ENCODE measurements at regions of chr2 and their contacts with region 1.

Region 1: DNA sequence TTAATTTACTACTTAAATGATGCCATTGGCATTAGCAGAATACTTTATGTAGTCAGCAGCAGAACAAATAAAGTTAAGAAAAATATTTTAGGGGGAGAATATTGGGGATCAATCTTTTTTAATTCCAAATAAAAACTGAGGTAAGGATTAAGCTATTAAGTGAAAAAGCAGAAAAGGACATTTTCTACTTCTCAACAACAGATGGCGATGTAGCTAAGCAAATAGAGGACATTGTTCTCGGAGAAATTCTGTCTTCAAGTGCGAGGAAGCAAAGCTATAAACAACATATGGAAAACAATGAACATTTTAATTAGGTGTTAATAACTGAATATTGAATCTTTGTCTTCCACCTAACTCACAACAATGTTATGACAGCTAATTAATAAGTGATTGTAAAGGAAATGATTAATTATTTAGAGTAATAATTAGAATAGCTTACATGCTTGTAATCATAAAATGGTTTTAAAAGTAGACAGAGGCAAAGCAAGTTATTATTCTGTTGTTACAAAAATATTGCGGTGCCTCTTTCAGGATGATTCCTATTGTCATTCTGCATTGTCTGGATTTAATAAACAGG is 32.9 kb upstream of the CCDC93 start:
- DNase-seq: peak in 6 of 9 donors; percentile 2 to 36 (median 30)
- ATAC-seq: peak; percentile 41
- H3K4me3 ChIP-seq: no peak overlapping the region
- H3K4me3 Mint-ChIP-seq: no peak overlapping the region
- H3K27ac ChIP-seq: no peak overlapping the region
- H3K27ac Mint-ChIP-seq: no peak overlapping the region
- H3K4me1 ChIP-seq: no peaks in the 10 kb centered on the region
- H3K4me1 Mint-ChIP-seq: peaks cover 0 to 4% (median 0%) of the 10 kb centered on the region in 7 donors
- H3K27me3 ChIP-seq: peaks cover 0 to under 1% of the 10 kb centered on the region in 2 donors
- H3K27me3 Mint-ChIP-seq: peaks cover 59 to 69% (median 64%) of the 10 kb centered on the region in 5 donors

Region 2: DNA sequence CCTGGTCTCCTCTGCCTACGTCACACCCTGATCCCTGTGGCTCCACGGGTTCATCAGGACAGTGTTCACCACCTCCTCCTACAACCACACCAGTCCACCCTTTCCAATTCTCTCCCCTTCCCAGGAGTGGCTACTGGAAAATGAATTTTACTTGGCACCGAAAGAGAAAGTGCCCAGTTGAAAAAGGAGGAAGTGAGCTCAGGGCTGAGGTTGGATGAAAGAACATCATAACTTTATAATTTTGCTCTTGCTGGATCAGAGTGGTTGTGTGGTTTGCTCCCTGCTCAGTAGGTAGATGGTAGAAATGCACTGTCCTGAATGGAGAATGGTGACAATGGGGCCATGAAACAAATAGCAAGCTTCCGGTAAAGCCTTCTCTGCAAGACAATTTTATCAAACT is 372.6 kb before region 1 on chr2:
- CTCF ChIA-PET with region 1: no interaction called
- POLR2A ChIA-PET with region 1: no interaction called
- intact Hi-C with region 1: no loop called
- DNase-seq: no peak
- ATAC-seq: no peak
- H3K4me3 ChIP-seq: no peak overlapping the region
- H3K4me3 Mint-ChIP-seq: no peak overlapping the region
- H3K27ac ChIP-seq: no peak overlapping the region
- H3K27ac Mint-ChIP-seq: no peak overlapping the region
- H3K4me1 ChIP-seq: no peaks in the 10 kb centered on the region
- H3K4me1 Mint-ChIP-seq: no peaks in the 10 kb centered on the region
- H3K27me3 ChIP-seq: peaks cover 0 to 2% of the 10 kb centered on the region in 2 donors
- H3K27me3 Mint-ChIP-seq: peaks cover 0 to 4% (median 0%) of the 10 kb centered on the region in 5 donors

Region 3: GRCh38 chr2:118148809-118149208 is 102.1 kb after region 1 on chr2:
- CTCF ChIA-PET with region 1: no interaction called
- POLR2A ChIA-PET with region 1: no interaction called
- intact Hi-C with region 1: loop called (anchors 1 to 5 kb)
- DNase-seq: no peak
- ATAC-seq: no peak
- H3K4me3 ChIP-seq: no peak overlapping the region
- H3K4me3 Mint-ChIP-seq: no peak overlapping the region
- H3K27ac ChIP-seq: no peak overlapping the region
- H3K27ac Mint-ChIP-seq: no peak overlapping the region
- H3K4me1 ChIP-seq: no peaks in the 10 kb centered on the region
- H3K4me1 Mint-ChIP-seq: peaks cover 0 to 4% (median 0%) of the 10 kb centered on the region in 7 donors
- H3K27me3 ChIP-seq: no peaks in the 10 kb centered on the region
- H3K27me3 Mint-ChIP-seq: peaks cover 2 to 33% (median 19%) of the 10 kb centered on the region in 5 donors

Region 4: DNA sequence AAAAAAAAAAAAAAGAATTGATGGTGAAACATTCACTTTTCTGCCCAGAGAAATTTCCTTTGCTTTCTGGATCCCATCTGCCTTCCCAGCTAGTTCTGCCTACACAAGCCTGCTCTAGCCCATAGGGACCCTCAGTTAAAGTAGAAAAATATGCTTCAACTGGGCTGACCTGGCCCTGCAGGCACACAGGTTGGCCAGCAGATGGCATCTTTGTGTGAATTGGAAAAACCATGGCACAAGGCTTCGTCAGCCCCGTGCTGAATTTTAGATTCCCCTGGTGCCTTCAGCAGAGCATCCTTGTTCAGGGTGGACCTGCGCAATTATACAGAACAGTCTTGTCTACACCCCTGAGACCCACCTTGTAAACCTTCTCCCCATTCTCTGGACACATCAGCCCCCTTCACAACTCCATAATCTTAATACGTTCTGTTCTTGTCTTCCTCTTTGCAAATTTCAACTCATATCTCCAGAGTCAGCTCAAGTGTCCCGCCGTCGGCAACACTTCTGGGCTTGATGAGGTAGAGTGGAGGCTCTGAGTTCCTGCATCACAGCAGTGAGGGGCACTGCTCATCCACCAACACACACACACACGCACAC is 156.1 kb after region 1 on chr2:
- CTCF ChIA-PET with region 1: no interaction called
- POLR2A ChIA-PET with region 1: no interaction called
- intact Hi-C with region 1: loop called (anchors 1 to 5 kb)
- DNase-seq: peak in 7 of 9 donors; percentile 30 to 57 (median 46)
- ATAC-seq: peak; percentile 91
- H3K4me3 ChIP-seq: no peak overlapping the region
- H3K4me3 Mint-ChIP-seq: peak overlapping the region; percentile 9 to 70 (median 36)
- H3K27ac ChIP-seq: no peak overlapping the region
- H3K27ac Mint-ChIP-seq: no peak overlapping the region
- H3K4me1 ChIP-seq: no peaks in the 10 kb centered on the region
- H3K4me1 Mint-ChIP-seq: peaks cover 4 to 7% (median 6%) of the 10 kb centered on the region in 7 donors
- H3K27me3 ChIP-seq: no peaks in the 10 kb centered on the region
- H3K27me3 Mint-ChIP-seq: peaks cover 19 to 28% (median 22%) of the 10 kb centered on the region in 5 donors

Region 5: DNA sequence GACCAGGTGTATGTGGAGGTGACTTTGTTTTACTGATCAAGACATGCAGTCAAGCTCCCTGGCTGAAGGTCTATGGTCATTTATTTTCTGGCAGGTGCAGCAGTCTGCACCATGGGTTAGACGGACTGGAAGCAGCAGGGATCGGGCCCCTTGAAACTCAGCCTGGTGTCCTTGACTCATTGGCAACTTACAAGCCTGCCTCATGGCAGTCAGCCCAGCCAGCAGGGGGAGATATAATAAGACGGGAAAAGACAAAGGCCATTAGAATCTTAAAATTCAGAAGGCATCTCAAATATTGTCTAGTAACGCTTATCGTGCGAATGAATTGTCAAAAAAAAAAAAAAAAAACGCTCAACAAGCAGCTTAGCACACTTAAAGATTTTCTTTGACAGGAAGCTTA is 492.6 kb after region 1 on chr2:
- CTCF ChIA-PET with region 1: no interaction called
- POLR2A ChIA-PET with region 1: no interaction called
- intact Hi-C with region 1: loop called in 1 of 2 experiments (anchors 10 kb)
- DNase-seq: no peak
- ATAC-seq: no peak
- H3K4me3 ChIP-seq: no peak overlapping the region
- H3K4me3 Mint-ChIP-seq: no peak overlapping the region
- H3K27ac ChIP-seq: no peak overlapping the region
- H3K27ac Mint-ChIP-seq: no peak overlapping the region
- H3K4me1 ChIP-seq: no peaks in the 10 kb centered on the region
- H3K4me1 Mint-ChIP-seq: no peaks in the 10 kb centered on the region
- H3K27me3 ChIP-seq: no peaks in the 10 kb centered on the region
- H3K27me3 Mint-ChIP-seq: peaks cover 0 to 17% (median 11%) of the 10 kb centered on the region in 5 donors

Region 6: DNA sequence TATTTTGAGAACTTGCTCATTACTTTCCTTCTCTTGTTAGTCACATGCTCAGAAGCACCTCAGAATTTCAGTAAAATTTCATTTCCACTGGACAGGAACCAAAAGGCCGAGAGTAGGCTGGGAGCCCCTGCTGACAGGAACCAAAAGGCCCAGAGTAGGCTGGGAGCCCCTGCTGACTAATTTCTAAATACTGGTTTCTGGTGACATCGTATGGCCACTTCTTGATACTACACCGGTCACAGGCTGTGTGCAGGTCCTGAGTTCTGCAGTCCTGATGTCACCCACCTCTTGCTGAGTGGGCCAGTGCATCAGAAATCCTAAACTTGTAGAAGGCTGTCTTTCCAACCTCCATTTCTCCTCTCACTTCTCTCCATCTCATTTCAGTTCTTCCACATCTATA is 818.4 kb after region 1 on chr2:
- CTCF ChIA-PET with region 1: interaction called, 3 read pairs
- POLR2A ChIA-PET with region 1: no interaction called
- intact Hi-C with region 1: loop called (anchors 1 to 2 kb)
- DNase-seq: peak in 1 of 9 donors; percentile 32
- ATAC-seq: peak; percentile 76
- H3K4me3 ChIP-seq: no peak overlapping the region
- H3K4me3 Mint-ChIP-seq: no peak overlapping the region
- H3K27ac ChIP-seq: no peak overlapping the region
- H3K27ac Mint-ChIP-seq: no peak overlapping the region
- H3K4me1 ChIP-seq: no peaks in the 10 kb centered on the region
- H3K4me1 Mint-ChIP-seq: peaks cover 0 to 2% (median 0%) of the 10 kb centered on the region in 7 donors
- H3K27me3 ChIP-seq: no peaks in the 10 kb centered on the region
- H3K27me3 Mint-ChIP-seq: peaks cover 32 to 54% (median 48%) of the 10 kb centered on the region in 5 donors

Region 7: DNA sequence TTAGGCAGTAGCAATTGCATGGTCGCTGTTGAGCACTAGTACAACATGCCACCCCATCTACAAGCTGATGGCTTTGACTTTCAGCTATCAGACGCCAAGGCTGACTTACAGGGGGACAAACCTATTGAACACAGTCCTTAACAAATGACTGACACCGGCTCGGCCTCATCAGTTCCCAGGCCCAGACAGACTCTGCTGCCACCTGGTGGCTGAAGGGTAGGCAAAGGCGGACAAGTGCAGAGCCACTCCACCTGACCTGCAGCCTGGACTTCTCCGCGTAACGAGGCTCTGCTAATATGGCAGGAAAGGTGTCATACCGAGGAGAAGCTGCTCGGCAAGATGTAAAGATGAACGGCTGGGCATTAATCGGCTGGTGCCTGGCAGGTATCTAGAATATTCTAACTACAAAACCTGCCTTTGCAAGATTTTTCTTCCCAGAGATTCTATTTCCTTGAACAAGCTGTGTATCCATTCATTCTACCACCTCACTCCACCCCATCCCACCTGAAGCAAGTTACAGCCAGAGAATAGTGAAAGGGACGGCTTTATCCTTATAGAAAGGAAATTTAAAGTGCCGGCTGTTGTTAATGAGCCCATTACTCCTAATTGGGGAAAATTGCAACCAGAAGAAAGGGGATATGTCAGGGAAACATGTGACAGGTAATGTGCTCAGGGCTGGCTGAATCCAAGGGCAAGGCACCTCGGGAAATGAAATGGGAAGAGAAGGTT is 1244.3 kb after region 1 on chr2:
- CTCF ChIA-PET with region 1: interaction called, 3 read pairs
- POLR2A ChIA-PET with region 1: no interaction called
- intact Hi-C with region 1: loop called in 1 of 2 experiments (anchors 5 kb)
- DNase-seq: peak in 4 of 9 donors; percentile 34 to 72 (median 48)
- ATAC-seq: no peak
- H3K4me3 ChIP-seq: no peak overlapping the region
- H3K4me3 Mint-ChIP-seq: no peak overlapping the region
- H3K27ac ChIP-seq: no peak overlapping the region
- H3K27ac Mint-ChIP-seq: no peak overlapping the region
- H3K4me1 ChIP-seq: no peaks in the 10 kb centered on the region
- H3K4me1 Mint-ChIP-seq: no peaks in the 10 kb centered on the region
- H3K27me3 ChIP-seq: no peaks in the 10 kb centered on the region
- H3K27me3 Mint-ChIP-seq: no peaks in the 10 kb centered on the region

Measured in naive thymus-derived CD4-positive, alpha-beta T cell (primary cell).